Activated CD4-positive, alpha-beta memory T cell treated with anti-CD3 and anti-CD28 coated beads for 36 hours (primary cell): ENCODE measurements at regions of chr3 and their contacts with region 1.

Region 1: GRCh38 chr3:194344012-194344411 is 7.1 kb downstream of the CPN2 start:
- DNase-seq: peak; percentile 77
- H3K4me3 Mint-ChIP-seq: no peak overlapping the region
- H3K27ac Mint-ChIP-seq: no peak overlapping the region
- H3K4me1 Mint-ChIP-seq: peaks cover 2% of the 10 kb centered on the region
- H3K27me3 Mint-ChIP-seq: no peaks in the 10 kb centered on the region

Region 2: DNA sequence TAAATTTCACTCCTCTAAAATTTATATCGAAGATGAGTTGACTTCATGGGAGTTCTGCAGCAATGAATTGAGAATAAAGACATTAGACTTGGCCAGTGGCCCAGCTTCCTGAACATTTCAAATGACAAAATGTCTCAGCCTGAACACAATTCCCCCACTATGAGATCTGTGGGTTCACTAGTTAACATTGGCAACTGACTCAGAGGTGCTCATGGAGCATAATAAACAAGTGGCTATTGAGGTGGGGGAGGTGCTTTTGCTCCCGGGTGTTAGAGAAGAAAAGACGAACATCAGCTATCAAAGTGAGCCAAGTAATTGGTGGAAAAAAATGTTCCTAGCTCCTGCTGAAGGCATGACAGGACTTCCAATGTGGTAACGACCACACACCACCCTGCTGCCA is 795.6 kb before region 1 on chr3:
- CTCF ChIA-PET with region 1: no interaction called
- POLR2A ChIA-PET with region 1: no interaction called
- intact Hi-C with region 1: no loop called
- DNase-seq: no peak
- H3K4me3 Mint-ChIP-seq: no peak overlapping the region
- H3K27ac Mint-ChIP-seq: no peak overlapping the region
- H3K4me1 Mint-ChIP-seq: no peaks in the 10 kb centered on the region
- H3K27me3 Mint-ChIP-seq: no peaks in the 10 kb centered on the region

Region 3: GRCh38 chr3:194323785-194324735 is 20.0 kb before region 1 on chr3:
- CTCF ChIA-PET with region 1: interaction called, 29 read pairs
- POLR2A ChIA-PET with region 1: no interaction called
- intact Hi-C with region 1: no loop called
- DNase-seq: peak; percentile 54
- H3K4me3 Mint-ChIP-seq: no peak overlapping the region
- H3K27ac Mint-ChIP-seq: no peak overlapping the region
- H3K4me1 Mint-ChIP-seq: peaks cover 8% of the 10 kb centered on the region
- H3K27me3 Mint-ChIP-seq: peaks cover 4% of the 10 kb centered on the region

Region 4: GRCh38 chr3:194353956-194354714 is 10.1 kb after region 1 on chr3:
- CTCF ChIA-PET with region 1: interaction called, 22 read pairs
- POLR2A ChIA-PET with region 1: no interaction called
- intact Hi-C with region 1: no loop called
- DNase-seq: no peak
- H3K4me3 Mint-ChIP-seq: no peak overlapping the region
- H3K27ac Mint-ChIP-seq: no peak overlapping the region
- H3K4me1 Mint-ChIP-seq: no peaks in the 10 kb centered on the region
- H3K27me3 Mint-ChIP-seq: no peaks in the 10 kb centered on the region

Region 5: GRCh38 chr3:194373028-194373427 is 29.0 kb after region 1 on chr3:
- CTCF ChIA-PET with region 1: no interaction called
- POLR2A ChIA-PET with region 1: no interaction called
- intact Hi-C with region 1: no loop called
- DNase-seq: no peak
- H3K4me3 Mint-ChIP-seq: no peak overlapping the region
- H3K27ac Mint-ChIP-seq: no peak overlapping the region
- H3K4me1 Mint-ChIP-seq: no peaks in the 10 kb centered on the region
- H3K27me3 Mint-ChIP-seq: peaks cover 25% of the 10 kb centered on the region

Region 6: DNA sequence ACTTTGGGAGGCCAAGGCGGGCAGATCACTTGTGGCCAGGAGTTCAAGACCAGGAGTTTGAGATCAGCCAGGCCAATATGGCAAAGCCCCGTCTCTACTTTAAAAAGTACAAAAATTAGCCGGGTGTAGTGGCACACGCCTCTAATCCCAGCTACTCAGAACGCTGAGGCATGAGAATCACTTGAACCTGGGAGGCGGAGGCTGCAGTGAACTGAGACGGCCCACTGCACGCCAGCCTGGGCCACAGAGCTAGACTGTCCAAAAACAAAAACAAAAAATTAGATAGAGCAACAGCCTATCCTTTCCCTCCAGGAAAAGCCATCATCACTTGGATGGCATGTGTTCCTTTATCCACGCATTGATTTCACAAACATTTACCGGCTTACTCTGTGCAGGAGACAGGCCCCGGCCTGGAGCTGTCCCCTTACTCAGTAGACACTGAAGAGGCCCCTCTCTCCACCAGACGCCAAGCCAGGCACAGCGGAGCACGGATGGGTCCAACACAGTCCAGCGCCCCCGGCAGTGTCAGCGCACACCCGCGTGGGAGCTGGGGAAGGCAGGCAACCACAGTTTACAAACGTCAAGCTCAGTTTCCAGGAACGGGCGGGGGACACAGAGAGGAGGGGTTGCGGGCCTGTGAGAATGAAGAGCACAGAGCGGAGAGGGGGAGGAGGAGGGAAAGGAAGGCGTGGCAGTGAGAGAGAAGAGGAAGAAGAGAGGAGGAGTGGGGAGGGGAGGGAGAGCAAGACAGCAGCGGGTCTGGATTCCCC is 52.0 kb after region 1 on chr3:
- CTCF ChIA-PET with region 1: interaction called, 34 read pairs
- POLR2A ChIA-PET with region 1: no interaction called
- intact Hi-C with region 1: no loop called
- DNase-seq: peak; percentile 74
- H3K4me3 Mint-ChIP-seq: peak overlapping the region; percentile 44
- H3K27ac Mint-ChIP-seq: peak overlapping the region; percentile 49
- H3K4me1 Mint-ChIP-seq: peaks cover 51% of the 10 kb centered on the region
- H3K27me3 Mint-ChIP-seq: peaks cover 33% of the 10 kb centered on the region

Region 7: DNA sequence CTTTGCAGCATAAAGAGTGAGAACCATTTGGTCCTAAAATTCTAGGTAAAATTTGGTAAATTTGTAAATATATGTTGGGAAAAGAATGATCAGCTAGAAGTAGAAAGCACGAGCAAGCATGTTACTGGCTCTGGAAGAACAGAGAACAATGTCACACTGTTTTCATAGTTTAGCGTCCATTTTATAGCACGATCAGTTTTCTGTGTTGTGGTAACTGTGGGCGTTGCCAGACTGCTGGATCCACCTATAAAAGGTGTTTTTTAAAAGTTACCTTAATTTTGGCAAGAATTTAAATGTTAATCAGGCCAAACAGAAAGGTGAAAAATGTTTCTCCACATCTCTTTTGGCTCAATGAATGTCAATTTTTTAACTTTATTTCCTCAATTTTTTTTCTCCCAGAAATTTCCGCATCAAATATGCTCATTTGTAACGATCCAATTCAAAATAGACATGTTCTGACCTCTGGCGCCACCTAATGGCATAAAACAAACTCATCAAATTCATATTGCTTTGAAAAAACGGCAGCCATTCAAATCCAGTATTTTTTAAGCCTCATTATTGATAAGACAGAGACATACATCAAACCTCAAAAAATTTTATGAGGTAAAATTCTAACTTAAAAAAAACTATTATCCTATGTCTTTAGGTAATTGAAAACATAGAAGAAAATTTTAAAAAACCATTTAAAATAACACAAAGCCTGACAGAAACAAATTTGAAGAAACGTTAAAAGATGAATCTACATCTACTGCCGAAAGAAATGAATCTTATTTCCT is 60.5 kb after region 1 on chr3:
- CTCF ChIA-PET with region 1: interaction called, 34 read pairs
- POLR2A ChIA-PET with region 1: no interaction called
- intact Hi-C with region 1: no loop called
- DNase-seq: peak; percentile 28
- H3K4me3 Mint-ChIP-seq: no peak overlapping the region
- H3K27ac Mint-ChIP-seq: no peak overlapping the region
- H3K4me1 Mint-ChIP-seq: peaks cover 12% of the 10 kb centered on the region
- H3K27me3 Mint-ChIP-seq: no peaks in the 10 kb centered on the region